ENCODE measurements at regions of chr10 and their contacts with region 1.

Region 1: DNA sequence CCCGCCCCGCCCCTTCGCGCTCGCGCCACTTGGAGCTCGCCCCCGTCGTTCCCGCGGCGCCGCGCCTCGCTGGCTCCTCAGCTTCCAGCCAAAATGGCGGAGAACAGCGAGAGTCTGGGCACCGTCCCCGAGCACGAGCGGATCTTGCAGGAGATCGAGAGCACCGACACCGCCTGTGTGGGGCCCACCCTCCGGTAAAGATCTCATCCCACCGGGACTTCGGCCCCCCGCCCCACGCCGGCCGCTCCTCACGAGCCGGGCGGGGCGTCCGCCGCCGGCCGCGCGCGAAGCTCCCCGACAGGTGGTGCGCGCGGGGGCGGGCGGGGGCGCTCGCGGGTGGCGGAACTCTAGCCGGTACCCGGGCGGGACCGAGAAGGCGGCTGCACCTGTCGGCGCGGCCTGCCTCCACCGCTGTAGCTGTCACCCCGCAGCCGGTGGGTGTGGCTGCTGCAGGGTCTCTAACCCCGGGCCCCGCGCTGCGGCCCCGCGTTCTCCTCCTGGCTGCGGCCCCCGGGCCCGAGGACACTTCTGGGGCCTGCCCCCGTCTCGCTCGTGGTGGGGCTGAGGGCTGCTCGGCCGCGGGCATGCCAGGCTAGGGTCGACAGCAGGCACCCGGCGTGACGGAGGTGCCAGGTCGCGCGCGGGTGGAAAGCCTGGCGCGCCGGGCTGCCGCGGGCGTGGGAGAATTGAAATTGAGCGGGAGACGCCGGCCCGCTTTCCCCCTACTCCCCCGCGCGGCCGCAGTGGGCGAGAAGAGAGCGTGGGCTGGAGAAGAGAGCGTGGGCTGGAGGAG is at the start of gene EXOC6:
- DNase-seq: peak; percentile 71
- ATAC-seq: peak; percentile 86
- H3K4me3 ChIP-seq: peak within 1 kb of the TSS; percentile 73 to 89
- H3K27ac ChIP-seq: peak within 1 kb of the TSS; percentile 68
- H3K4me1 ChIP-seq: peaks cover 4 to 15% of the 10 kb centered on the region in 2 experiments; a peak in 3 of 4 replicates
- H3K27me3 ChIP-seq: no peaks in the 10 kb centered on the region
- CTCF ChIP-seq: no peak
- POLR2A ChIP-seq: no peak
- RAD21 ChIP-seq: no peak
- total RNA-seq, gene EXOC6: 12.9 TPM

Region 2: DNA sequence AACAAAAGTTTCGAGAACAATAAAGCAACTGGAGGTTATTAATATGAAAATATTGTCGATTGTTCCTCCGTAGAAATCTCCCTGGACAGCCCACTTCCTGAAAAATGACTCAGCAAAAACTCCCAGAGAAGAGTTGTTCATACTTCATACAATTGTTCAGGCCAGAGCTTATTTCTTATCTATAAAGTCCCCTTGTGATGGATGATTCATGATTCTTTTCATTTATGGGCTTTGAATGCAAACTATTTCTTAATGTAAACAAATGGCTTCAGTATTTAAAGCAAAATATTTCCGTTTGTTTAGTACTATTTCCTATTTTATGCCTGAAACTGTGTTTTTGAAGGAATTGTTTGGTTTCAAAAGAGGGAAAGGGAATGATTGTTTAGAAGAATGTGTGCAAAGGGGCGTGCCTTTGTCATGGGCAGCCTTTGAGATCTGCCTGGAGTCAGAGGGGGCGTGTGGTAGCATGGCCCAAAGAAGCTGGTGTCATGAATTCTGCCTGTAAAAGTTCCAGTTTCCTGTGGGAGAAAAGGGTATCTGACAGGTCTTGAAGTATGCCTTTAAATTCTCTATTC is 26.5 kb before region 1 on chr10:
- CTCF ChIA-PET with region 1: interaction called, 12 read pairs
- POLR2A ChIA-PET with region 1: no interaction called
- RAD21 ChIA-PET with region 1: no interaction called
- intact Hi-C with region 1: no loop called
- DNase-seq: no peak
- ATAC-seq: no peak
- H3K4me3 ChIP-seq: no peak overlapping the region
- H3K27ac ChIP-seq: no peak overlapping the region
- H3K4me1 ChIP-seq: peaks cover 0 to 11% of the 10 kb centered on the region in 2 experiments; a peak in 2 of 4 replicates
- H3K27me3 ChIP-seq: no peaks in the 10 kb centered on the region
- CTCF ChIP-seq: no peak
- POLR2A ChIP-seq: no peak
- RAD21 ChIP-seq: no peak

Region 3: DNA sequence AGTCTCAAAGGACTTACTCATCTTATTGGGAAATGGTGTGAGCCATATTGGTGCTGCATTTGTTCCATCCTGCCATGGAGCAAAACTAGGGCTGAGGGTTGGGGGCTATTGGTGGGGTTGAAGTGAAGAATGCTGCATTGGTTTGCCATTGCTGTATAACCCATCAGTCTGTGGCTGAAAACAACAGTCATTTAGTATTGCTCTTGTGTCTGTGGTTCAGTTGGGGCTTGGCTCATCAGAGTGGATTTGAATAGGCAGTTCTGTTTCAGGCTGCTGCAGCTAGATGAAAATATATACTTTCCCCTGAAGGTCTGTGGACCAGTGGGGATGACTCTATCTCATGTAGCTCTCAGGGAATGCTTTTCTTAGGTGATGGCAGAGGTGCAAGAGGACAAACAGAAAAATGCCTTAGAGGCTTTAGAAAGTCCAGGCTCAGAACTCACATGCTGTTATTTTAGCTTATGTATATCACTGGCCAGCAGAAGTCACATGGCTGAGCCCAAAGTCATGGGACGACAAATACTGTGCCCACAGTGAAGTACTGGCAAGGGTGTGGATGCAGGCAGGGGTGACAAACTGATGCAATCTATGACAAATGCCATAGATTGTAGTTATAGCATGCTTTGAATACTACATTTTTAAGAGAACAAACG is 15.5 kb before region 1 on chr10:
- CTCF ChIA-PET with region 1: interaction called, 17 read pairs
- POLR2A ChIA-PET with region 1: interaction called, 5 read pairs
- RAD21 ChIA-PET with region 1: interaction called in 1 of 2 experiments, 3 read pairs
- intact Hi-C with region 1: no loop called
- DNase-seq: no peak
- ATAC-seq: no peak
- H3K4me3 ChIP-seq: no peak overlapping the region
- H3K27ac ChIP-seq: no peak overlapping the region
- H3K4me1 ChIP-seq: no peaks in the 10 kb centered on the region
- H3K27me3 ChIP-seq: no peaks in the 10 kb centered on the region
- CTCF ChIP-seq: no peak
- POLR2A ChIP-seq: no peak
- RAD21 ChIP-seq: no peak